Activated CD4-positive, alpha-beta memory T cell treated with anti-CD3 and anti-CD28 coated beads, Interleukin-2, amount 10 ng/mL, durations not matched to agents 7 days and 5 days (primary cell): ENCODE measurements at regions of chr1 and their contacts with region 1.

Region 1: GRCh38 chr1:156212833-156213643 is at the start of gene PMF1:
- DNase-seq: peak; percentile 97
- H3K4me3 Mint-ChIP-seq: peak within 1 kb of the TSS; percentile 87
- H3K27ac Mint-ChIP-seq: peak within 1 kb of the TSS; percentile 94
- H3K4me1 Mint-ChIP-seq: peaks cover 46% of the 10 kb centered on the region
- H3K27me3 Mint-ChIP-seq: no peaks in the 10 kb centered on the region
- total RNA-seq, gene PMF1: 65.5 to 67.7 TPM

Region 2: DNA sequence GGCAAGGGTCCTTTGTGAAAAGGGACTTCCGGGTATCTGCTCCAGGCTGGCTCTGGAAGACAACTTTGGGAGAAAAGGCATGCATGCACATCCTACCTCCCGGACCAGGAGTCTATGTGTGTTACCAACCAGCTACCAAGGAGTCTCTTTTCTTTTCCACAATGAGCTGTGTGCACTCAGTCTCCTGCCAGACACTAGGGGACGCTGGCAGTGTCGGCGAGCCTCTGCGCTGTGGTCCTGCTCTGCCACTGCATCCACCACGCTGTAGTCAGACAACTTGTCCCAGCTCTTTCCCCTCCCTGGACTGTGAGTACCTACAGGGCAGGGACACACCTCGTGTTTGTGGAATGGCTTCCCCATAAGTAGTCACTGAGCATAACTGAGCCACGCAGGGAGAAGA is 187.2 kb before region 1 on chr1:
- CTCF ChIA-PET with region 1: no interaction called
- POLR2A ChIA-PET with region 1: no interaction called
- DNase-seq: peak; percentile 49
- H3K4me3 Mint-ChIP-seq: no peak overlapping the region
- H3K27ac Mint-ChIP-seq: no peak overlapping the region
- H3K4me1 Mint-ChIP-seq: peaks cover 18% of the 10 kb centered on the region
- H3K27me3 Mint-ChIP-seq: peaks cover 4% of the 10 kb centered on the region

Region 3: DNA sequence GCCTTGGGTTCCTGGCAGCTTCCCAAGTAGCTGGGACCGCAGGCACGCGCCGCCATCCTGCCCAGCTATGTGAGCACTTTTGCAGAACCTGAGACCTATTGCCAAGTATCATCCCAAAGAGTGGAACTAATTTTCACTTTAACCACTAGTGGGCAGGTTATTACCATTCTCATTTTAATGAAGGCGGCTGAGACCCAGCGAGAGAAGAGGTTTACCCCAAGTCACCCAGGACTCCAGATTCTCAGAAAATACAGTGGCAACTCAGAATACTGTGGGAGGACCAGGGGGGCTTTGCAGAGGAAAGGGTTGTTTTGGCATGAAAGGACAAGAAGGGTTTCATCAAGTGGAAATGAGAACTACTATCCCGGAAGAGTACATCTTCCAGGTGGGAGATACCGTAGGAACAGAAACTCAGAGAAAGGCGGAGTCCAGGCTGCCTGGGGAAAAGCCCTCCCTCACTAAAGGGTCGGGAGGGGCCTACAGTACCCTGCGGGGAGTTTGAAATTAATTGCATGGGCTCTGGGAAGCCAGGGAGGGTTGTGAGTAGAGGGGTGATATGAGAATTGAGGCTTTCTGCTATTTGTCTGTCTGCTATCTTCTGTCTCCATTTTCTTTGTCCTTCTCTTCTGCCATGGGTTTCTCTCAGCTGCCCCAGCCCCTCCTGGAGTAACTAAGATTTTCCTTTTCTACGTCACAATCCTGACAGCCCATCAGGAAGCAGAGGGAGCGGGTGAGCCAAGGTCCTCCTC is 66.8 kb before region 1 on chr1:
- CTCF ChIA-PET with region 1: interaction called, 8 read pairs
- POLR2A ChIA-PET with region 1: interaction called, 28 read pairs
- DNase-seq: peak; percentile 54
- H3K4me3 Mint-ChIP-seq: peak overlapping the region; percentile 23
- H3K27ac Mint-ChIP-seq: peak overlapping the region; percentile 68
- H3K4me1 Mint-ChIP-seq: peaks cover 29% of the 10 kb centered on the region
- H3K27me3 Mint-ChIP-seq: no peaks in the 10 kb centered on the region

Region 4: GRCh38 chr1:156160743-156161171 is 52.3 kb before region 1 on chr1:
- CTCF ChIA-PET with region 1: no interaction called
- POLR2A ChIA-PET with region 1: interaction called, 19 read pairs
- DNase-seq: peak; percentile 73
- H3K4me3 Mint-ChIP-seq: peak overlapping the region; percentile 56
- H3K27ac Mint-ChIP-seq: peak overlapping the region; percentile 66
- H3K4me1 Mint-ChIP-seq: peaks cover 64% of the 10 kb centered on the region
- H3K27me3 Mint-ChIP-seq: no peaks in the 10 kb centered on the region

Region 5: DNA sequence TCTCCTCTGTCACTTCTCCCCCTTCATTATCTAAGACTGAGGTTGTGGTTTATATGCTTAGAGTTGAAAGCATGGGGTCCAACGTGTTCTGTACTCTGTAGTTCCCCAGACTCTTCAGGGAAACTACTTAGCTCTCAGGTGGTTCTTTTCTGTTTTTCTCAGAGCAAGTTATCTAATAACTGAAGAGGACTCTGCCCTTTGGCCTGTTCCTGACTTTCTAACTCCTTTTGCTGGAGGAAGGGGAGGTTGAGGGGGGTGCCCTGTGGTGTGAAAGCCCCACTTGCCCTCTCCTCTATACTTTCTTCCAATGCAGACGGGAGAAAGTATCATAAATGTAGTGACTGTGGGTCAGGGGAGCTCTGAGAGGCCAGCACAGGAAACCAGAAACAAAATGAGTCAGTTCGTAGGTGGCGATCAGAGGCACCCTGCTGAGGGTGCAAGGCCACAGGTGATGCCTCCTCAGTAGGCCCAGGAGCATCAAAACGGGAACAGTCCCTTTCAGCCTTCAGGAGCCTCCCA is 14.1 kb before region 1 on chr1:
- CTCF ChIA-PET with region 1: interaction called, 13 read pairs
- POLR2A ChIA-PET with region 1: interaction called, 156 read pairs
- DNase-seq: peak; percentile 42
- H3K4me3 Mint-ChIP-seq: peak overlapping the region; percentile 30
- H3K27ac Mint-ChIP-seq: peak overlapping the region; percentile 84
- H3K4me1 Mint-ChIP-seq: peaks cover 63% of the 10 kb centered on the region
- H3K27me3 Mint-ChIP-seq: no peaks in the 10 kb centered on the region